ENCODE measurements at regions of chr15 and their contacts with region 1.

Region 1: GRCh38 chr15:53950572-53950971 is 27.7 kb upstream of the UNC13C start:
- DNase-seq: no peak
- ATAC-seq: no peak
- H3K4me3 ChIP-seq: no peak overlapping the region
- H3K27ac ChIP-seq: no peak overlapping the region
- H3K4me1 ChIP-seq: no peaks in the 10 kb centered on the region
- H3K27me3 ChIP-seq: no peaks in the 10 kb centered on the region
- CTCF ChIP-seq: no peak
- POLR2A ChIP-seq: no peak

Region 2: DNA sequence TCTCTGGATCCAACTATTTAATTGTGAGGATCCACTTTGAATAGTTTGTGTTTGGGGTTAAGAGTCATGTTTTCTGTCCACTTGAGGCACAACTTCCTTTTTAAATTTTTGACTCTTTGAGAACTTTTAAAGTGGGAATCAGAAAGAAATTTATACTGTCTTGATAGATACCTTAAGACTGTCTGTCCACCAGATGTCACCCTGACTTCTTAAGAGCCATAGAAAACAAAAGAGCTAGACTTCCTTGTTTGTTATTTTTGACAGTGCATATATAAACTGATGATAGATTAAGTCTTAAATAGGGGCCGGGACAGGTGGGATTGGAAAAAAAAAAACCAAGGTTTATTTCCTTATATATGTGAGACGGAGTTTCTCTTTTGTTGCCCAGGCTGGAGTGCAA is 139.0 kb before region 1 on chr15:
- intact Hi-C with region 1: loop called in 1 of 10 experiments (anchors 10 kb)
- DNase-seq: no peak
- ATAC-seq: no peak
- H3K4me3 ChIP-seq: no peak overlapping the region
- H3K27ac ChIP-seq: no peak overlapping the region
- H3K4me1 ChIP-seq: peaks cover 0 to 7% (median 0%) of the 10 kb centered on the region in 12 donors
- H3K27me3 ChIP-seq: peaks cover 0 to 6% (median 0%) of the 10 kb centered on the region in 9 donors
- CTCF ChIP-seq: peak in 4 of 12 donors; percentile 11 to 40 (median 31)
- POLR2A ChIP-seq: no peak

Measured in heart left ventricle (tissue), 16 donors.